Activated T-helper 2 cell treated with anti-CD3 and anti-CD28 coated beads, Interferon-gamma antibody, Interleukin-2, Interleukin-4, amounts not matched to agents 10 μg/mL and 5 μg/mL and 100 μg/mL, durations not matched to agents 14 hours and 24 hours and 36 hours (primary cell): ENCODE measurements at regions of chr14 and their contacts with region 1.

Region 1: DNA sequence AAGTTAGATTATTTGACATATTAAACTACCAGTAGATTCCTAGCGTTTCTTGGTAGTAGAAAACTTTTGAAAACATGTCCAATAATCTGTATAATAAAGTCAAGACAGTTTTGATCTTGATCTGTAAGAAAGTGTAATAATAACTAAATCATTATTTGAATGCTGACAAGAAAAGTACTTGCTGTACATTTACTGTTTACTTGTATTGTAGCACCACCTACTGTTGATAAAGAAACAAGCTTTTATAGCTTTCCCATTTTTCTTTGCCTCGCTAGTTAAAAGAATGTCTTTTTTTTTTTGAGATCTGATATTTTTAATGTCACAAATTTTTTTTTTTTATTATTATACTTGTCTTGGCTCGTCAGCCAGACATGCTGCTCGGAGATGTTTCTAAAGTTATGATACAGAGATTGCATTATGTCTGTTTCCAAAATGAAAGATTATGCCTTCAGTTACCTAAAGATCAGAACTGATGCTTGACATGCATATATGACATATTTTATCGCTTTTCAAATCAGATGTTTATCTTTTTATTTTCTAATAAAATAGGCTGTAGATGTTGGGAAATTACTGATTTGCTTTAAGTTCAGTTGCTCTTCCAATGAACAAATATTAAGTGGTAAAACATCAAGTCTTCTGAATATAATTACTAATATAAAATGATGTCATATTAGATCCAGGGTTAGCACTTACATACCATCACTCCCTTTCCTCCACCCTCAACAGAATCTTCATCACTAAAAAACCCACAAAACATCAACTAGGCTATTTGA is 140.5 kb downstream of the AKAP6 start:
- DNase-seq: no peak
- H3K4me3 Mint-ChIP-seq: no peak overlapping the region
- H3K27ac Mint-ChIP-seq: no peak overlapping the region
- H3K4me1 Mint-ChIP-seq: no peaks in the 10 kb centered on the region
- H3K27me3 Mint-ChIP-seq: peaks cover 6% of the 10 kb centered on the region

Region 2: GRCh38 chr14:31510222-31510621 is 959.4 kb before region 1 on chr14:
- intact Hi-C with region 1: loop called (anchors 2 kb)
- DNase-seq: no peak
- H3K4me3 Mint-ChIP-seq: no peak overlapping the region
- H3K27ac Mint-ChIP-seq: no peak overlapping the region
- H3K4me1 Mint-ChIP-seq: no peaks in the 10 kb centered on the region
- H3K27me3 Mint-ChIP-seq: no peaks in the 10 kb centered on the region

Region 3: DNA sequence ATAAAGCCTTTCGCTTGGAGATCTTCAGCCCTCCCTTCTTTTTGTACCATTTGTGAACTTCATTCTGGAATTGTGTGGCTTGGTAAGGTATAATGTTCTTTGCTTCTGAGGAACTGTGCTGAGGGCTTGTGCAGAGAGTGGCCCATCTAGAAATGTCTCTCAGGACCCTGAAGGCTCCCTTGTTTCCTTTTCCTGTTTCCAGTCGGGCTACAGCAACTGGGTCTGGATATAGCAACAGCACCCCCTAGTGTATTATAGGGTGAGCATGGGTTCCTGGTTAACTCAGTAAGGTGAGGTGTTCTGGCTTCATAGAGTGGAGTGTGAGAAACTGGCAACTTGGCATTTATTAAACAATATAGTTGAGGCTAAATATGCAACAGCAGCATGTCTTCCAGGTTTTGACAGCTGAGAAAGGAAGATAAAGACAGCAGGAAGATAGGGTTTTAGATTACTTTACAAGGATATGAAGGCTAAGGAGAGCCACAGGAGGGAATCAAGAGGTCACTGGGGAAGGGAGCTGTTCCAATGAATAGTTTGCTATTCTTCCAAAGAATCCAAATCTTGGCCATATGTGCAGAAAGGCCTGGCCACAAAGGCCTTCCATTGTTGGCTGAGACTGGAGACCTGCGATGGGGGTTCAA is 217.4 kb before region 1 on chr14:
- intact Hi-C with region 1: loop called (anchors 5 kb)
- DNase-seq: peak; percentile 28
- H3K4me3 Mint-ChIP-seq: no peak overlapping the region
- H3K27ac Mint-ChIP-seq: no peak overlapping the region
- H3K4me1 Mint-ChIP-seq: no peaks in the 10 kb centered on the region
- H3K27me3 Mint-ChIP-seq: no peaks in the 10 kb centered on the region

Region 4: GRCh38 chr14:32430326-32430725 is 39.2 kb before region 1 on chr14:
- intact Hi-C with region 1: no loop called
- DNase-seq: no peak
- H3K4me3 Mint-ChIP-seq: no peak overlapping the region
- H3K27ac Mint-ChIP-seq: no peak overlapping the region
- H3K4me1 Mint-ChIP-seq: no peaks in the 10 kb centered on the region
- H3K27me3 Mint-ChIP-seq: peaks cover 4% of the 10 kb centered on the region